Colonic mucosa (tissue), 4 donors: ENCODE measurements at regions of chr1 and their contacts with region 1.

Region 1: DNA sequence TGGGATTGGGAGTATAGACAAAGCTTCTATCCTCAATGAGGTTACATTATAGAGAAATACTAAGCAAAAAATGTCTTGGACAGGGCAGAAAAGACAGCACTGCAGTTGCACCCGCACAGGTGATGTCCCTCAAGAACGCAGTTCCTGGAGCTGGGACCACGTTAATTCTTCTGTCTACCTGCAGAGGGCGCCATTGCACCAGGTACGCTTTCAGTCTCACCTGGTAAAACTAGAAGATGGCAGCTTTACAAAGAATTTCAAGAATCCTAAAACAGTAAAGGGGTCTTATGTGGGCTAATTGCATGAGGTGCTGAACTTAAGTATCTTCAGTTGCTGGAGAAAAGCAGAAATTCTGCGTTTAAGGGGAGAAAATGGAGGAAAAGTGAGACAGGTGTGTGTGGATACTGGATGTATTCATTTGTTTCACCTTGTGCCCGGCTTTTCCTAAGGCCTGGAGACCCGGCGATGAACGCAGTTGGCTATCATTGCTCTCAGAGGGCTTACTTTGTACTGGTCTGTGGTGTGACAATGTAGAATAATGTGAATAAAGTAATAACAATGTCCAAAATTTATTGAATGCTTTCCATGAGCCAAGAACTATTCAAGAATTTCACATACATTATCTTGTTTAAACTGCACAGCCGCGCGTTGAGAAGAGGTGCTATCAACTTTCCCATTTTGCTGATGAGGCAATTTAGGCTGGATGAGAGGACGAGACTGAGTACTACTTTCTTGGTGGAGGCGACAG is 276.3 kb upstream of the GREM2 start:
- DNase-seq: peak; percentile 64
- H3K4me3 ChIP-seq: no peak overlapping the region
- H3K27ac ChIP-seq: no peak overlapping the region
- H3K4me1 ChIP-seq: no peaks in the 10 kb centered on the region
- H3K27me3 ChIP-seq: no peaks in the 10 kb centered on the region
- CTCF ChIP-seq: peak; percentile 65

Region 2: DNA sequence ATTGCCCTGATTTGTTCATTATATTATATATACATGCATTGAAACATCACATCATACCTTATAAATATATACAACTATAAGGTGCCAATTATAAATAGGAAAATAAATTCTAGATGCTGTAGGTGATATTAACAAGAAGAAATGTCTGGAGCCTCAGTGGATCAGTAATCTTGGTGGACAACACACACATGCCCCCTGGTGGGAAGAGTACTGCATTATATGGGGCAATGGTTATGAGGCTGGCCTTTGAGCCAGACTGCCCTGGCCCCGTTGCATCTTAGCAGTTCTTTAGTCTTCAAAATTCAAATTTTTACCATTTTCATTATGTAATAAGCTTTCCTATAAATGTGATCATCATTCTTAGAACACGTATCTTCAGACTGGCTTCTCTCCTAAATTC is 58.7 kb after region 1 on chr1:
- intact Hi-C with region 1: loop called (anchors 2 kb)
- DNase-seq: peak; percentile 61
- H3K4me3 ChIP-seq: no peak overlapping the region
- H3K27ac ChIP-seq: no peak overlapping the region
- H3K4me1 ChIP-seq: no peaks in the 10 kb centered on the region
- H3K27me3 ChIP-seq: no peaks in the 10 kb centered on the region
- CTCF ChIP-seq: peak; percentile 52

Region 3: DNA sequence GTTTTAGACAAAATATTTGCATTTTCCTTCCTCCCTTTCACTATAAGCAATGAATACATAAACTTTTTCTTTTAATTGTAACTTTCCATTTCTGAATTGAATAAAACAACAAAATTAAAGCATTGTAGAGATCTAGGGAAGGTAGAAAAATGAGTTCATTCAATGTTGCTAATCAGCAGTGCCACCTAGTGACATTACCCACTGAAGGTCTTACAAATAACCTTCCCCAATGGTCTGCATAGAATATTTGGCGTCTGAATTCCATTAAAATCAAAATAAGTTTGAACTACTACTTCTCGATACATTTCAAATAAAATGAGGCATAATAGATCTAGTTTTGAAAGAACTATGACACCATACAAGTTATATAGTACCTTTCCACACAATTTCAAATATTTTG is 611.7 kb after region 1 on chr1:
- intact Hi-C with region 1: loop called (anchors 10 kb)
- DNase-seq: no peak
- H3K4me3 ChIP-seq: no peak overlapping the region
- H3K27ac ChIP-seq: no peak overlapping the region
- H3K4me1 ChIP-seq: no peaks in the 10 kb centered on the region
- H3K27me3 ChIP-seq: no peaks in the 10 kb centered on the region
- CTCF ChIP-seq: no peak